ENCODE measurements at regions of chr18 and their contacts with region 1.

Region 1: GRCh38 chr18:35949903-35950627 is 22.4 kb upstream of the RMP24 start:
- DNase-seq: peak; percentile 61
- H3K4me3 Mint-ChIP-seq: peak overlapping the region; percentile 79
- H3K27ac Mint-ChIP-seq: no peak overlapping the region
- H3K4me1 Mint-ChIP-seq: no peaks in the 10 kb centered on the region
- H3K27me3 Mint-ChIP-seq: peaks cover 11% of the 10 kb centered on the region

Region 2: GRCh38 chr18:35386600-35387351 is 563.3 kb before region 1 on chr18:
- CTCF ChIA-PET with region 1: no interaction called
- intact Hi-C with region 1: loop called (anchors 2 kb)
- DNase-seq: peak; percentile 81
- H3K4me3 Mint-ChIP-seq: no peak overlapping the region
- H3K27ac Mint-ChIP-seq: no peak overlapping the region
- H3K4me1 Mint-ChIP-seq: peaks cover 2% of the 10 kb centered on the region
- H3K27me3 Mint-ChIP-seq: peaks cover 23% of the 10 kb centered on the region

Region 3: GRCh38 chr18:35592298-35592697 is 357.8 kb before region 1 on chr18:
- CTCF ChIA-PET with region 1: no interaction called
- intact Hi-C with region 1: loop called (anchors 1 kb)
- DNase-seq: peak; percentile 24
- H3K4me3 Mint-ChIP-seq: no peak overlapping the region
- H3K27ac Mint-ChIP-seq: no peak overlapping the region
- H3K4me1 Mint-ChIP-seq: peaks cover 42% of the 10 kb centered on the region
- H3K27me3 Mint-ChIP-seq: no peaks in the 10 kb centered on the region

Region 4: DNA sequence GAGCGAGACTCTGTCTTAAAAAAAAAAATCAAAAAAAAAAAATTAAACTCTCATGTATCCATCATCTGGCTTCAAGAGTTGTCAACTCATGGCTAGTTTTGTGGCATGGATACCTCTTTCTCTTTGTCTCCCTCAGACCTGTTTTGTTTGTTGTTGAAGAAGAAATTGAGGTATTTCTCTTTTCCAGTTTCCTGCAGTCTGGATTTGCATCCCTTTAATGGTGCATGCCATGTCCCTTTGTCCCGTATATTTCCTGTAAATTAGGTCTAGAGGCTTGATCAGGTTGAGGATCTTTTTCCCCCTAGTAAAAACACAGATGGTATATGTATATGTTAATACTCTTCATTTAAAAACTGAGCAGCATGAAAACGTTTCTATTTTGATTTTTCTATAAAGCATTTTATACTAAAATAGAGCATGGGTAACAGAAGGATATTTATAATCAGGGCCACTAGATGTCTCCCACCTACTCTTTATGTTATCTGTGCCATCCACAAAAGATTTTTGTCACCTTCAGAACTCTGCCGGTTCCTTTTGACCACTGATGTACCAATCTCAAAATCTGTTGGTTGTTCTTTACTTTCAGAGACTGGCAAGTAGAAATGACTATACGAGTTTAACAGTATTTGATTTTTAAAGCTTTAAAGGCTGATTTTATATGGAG is 288.4 kb before region 1 on chr18:
- CTCF ChIA-PET with region 1: no interaction called
- intact Hi-C with region 1: loop called (anchors 5 kb)
- DNase-seq: no peak
- H3K4me3 Mint-ChIP-seq: no peak overlapping the region
- H3K27ac Mint-ChIP-seq: no peak overlapping the region
- H3K4me1 Mint-ChIP-seq: no peaks in the 10 kb centered on the region
- H3K27me3 Mint-ChIP-seq: no peaks in the 10 kb centered on the region

Region 5: GRCh38 chr18:35756506-35757117 is 193.5 kb before region 1 on chr18:
- CTCF ChIA-PET with region 1: interaction called, 12 read pairs
- intact Hi-C with region 1: loop called (anchors 1 kb)
- DNase-seq: peak; percentile 78
- H3K4me3 Mint-ChIP-seq: no peak overlapping the region
- H3K27ac Mint-ChIP-seq: no peak overlapping the region
- H3K4me1 Mint-ChIP-seq: no peaks in the 10 kb centered on the region
- H3K27me3 Mint-ChIP-seq: peaks cover 18% of the 10 kb centered on the region

Region 6: GRCh38 chr18:35827275-35827902 is 122.7 kb before region 1 on chr18:
- CTCF ChIA-PET with region 1: interaction called, 3 read pairs
- intact Hi-C with region 1: loop called (anchors 2 kb)
- DNase-seq: peak; percentile 62
- H3K4me3 Mint-ChIP-seq: no peak overlapping the region
- H3K27ac Mint-ChIP-seq: peak overlapping the region; percentile 75
- H3K4me1 Mint-ChIP-seq: peaks cover 15% of the 10 kb centered on the region
- H3K27me3 Mint-ChIP-seq: peaks cover 22% of the 10 kb centered on the region

Region 7: DNA sequence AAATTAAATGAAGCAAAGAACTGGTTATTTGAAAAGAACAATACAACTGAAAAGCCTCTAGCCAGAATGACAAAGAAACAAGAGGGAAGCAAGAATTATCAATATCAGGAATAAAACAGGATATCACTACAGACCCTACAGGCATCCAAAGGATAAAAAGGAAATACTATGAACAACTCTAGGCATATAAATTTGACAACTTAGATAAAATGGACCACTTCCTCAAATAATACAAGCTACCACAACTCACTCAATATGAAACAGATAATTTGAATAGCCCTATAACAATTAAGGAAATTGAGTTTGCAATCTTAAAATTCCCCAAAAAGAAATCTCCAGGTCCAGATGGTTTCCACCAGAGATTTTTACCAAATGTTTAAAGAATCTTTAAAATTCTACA is 97.5 kb after region 1 on chr18:
- CTCF ChIA-PET with region 1: no interaction called
- intact Hi-C with region 1: no loop called
- DNase-seq: no peak
- H3K4me3 Mint-ChIP-seq: no peak overlapping the region
- H3K27ac Mint-ChIP-seq: no peak overlapping the region
- H3K4me1 Mint-ChIP-seq: peaks cover 46% of the 10 kb centered on the region
- H3K27me3 Mint-ChIP-seq: no peaks in the 10 kb centered on the region

Measured in activated naive CD4-positive, alpha-beta T cell treated with anti-CD3 and anti-CD28 coated beads for 36 hours (primary cell).